AG04449 (cell line): ENCODE measurements at regions of chr7 and their contacts with region 1.

Region 1: DNA sequence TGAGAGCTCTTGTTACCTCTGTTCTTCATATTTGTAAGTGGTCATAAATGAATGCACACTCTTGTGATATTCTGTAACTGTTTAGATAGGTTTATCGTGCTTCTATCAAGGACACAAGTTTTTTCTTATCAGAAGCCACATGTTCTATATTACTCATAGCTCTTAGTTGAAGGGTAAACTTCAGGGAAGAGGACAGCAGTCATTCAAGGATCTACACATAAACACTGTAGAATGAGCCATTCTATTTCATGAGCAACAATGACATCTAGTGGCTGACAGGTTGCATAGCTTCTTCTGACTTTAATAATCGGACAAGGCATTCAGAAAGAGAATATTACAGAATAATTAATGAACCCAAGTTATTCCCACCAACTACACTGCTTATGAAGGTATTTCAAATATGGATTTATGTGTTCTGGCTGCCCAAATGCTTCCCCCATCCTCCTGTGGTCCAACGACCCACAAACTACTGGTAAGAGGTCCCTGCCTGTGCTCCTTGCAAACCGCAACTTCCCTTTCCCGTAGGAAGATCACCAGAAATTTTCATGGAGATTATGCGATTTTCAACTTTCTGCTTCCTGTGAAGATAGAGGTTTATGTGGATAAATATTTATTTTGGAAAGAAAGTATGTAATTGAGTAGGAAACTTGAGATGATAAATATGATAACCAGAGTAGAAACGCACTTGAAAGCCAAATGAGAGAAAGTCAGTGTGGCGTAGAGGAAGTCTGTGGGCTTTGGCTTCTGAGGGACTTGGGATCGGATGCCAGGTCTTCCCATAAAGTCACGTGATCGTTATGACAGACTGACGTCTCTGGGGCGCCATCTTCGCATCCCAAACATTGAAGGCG is 16.8 kb upstream of the ABCB5 start:
- DNase-seq: peak; percentile 9
- H3K4me3 ChIP-seq: no peak overlapping the region
- CTCF ChIP-seq: peak; percentile 55

Region 2: GRCh38 chr7:19708397-19709248 is 890.1 kb before region 1 on chr7 and contains the start of gene POLR1F:
- CTCF ChIA-PET with region 1: interaction called, 378 read pairs
- POLR2A ChIA-PET with region 1: interaction called, 3 read pairs
- DNase-seq: peak; percentile 64
- H3K4me3 ChIP-seq: peak within 1 kb of the TSS; percentile 93
- CTCF ChIP-seq: peak; percentile 96

Region 3: GRCh38 chr7:19747740-19748339 is 850.8 kb before region 1 on chr7:
- CTCF ChIA-PET with region 1: interaction called, 88 read pairs
- POLR2A ChIA-PET with region 1: no interaction called
- DNase-seq: no peak
- H3K4me3 ChIP-seq: no peak overlapping the region
- CTCF ChIP-seq: peak; percentile 29

Region 4: DNA sequence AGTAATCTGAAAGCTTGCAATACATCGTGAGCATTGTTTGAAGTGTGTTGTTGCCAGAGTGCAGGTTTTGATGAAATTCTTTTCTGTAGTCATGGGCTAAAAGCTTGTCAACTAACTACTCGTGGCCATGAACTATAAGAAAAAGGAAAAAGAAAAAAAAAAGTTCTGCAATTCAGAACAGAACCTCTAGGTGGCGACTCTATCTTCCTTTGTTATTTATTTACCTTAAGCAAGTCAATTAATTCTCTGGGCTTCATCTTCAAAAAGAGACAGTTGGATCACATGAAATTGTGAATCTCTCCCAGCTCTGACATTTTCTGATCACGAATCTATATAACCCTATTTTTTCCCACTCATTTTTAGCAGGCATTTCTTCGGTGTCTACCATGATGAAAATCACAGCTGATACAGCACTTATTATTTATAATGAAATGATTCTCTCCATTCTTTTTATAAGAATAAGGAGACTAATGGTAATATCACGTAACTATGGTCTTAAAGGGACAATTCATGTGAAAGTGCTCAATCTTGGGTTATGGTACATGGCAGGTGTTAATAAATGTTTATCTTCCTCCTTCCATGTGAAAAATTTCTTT is 844.1 kb before region 1 on chr7:
- CTCF ChIA-PET with region 1: interaction called, 51 read pairs
- POLR2A ChIA-PET with region 1: no interaction called
- DNase-seq: no peak
- H3K4me3 ChIP-seq: no peak overlapping the region
- CTCF ChIP-seq: peak; percentile 41

Region 5: GRCh38 chr7:19982841-19983835 is 615.5 kb before region 1 on chr7:
- CTCF ChIA-PET with region 1: interaction called, 20 read pairs
- POLR2A ChIA-PET with region 1: no interaction called
- DNase-seq: no peak
- H3K4me3 ChIP-seq: no peak overlapping the region
- CTCF ChIP-seq: peak; percentile 43

Region 6: DNA sequence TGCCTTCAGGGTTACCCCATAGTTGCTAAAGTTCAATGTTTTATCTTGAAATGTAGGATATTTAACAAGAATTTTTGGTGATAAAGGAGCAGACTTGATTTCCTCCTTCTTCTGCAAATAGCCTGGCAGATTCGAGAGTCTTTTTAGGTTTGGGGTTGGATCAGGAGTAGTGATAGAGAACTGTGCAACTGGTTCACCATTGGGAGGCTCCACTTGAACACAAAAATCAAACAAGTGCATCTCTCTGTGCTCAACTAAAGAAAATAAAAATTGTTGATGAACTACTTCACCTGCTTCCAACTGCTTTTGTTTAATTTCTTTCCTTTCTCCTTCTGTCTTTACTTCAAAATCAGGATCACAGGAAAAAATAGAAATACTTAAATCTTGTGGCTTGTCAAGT is 440.0 kb before region 1 on chr7:
- CTCF ChIA-PET with region 1: interaction called, 10 read pairs
- POLR2A ChIA-PET with region 1: no interaction called
- DNase-seq: no peak
- H3K4me3 ChIP-seq: no peak overlapping the region
- CTCF ChIP-seq: no peak